ENCODE measurements at regions of chr9 and their contacts with region 1.

Region 1: GRCh38 chr9:36276781-36277181 is 18.5 kb upstream of the GNE start:
- DNase-seq: no peak

Region 2: GRCh38 chr9:35079426-35080341 is 1197.1 kb before region 1 on chr9 and contains the start of gene FANCG:
- intact Hi-C with region 1: loop called in 1 of 2 experiments (anchors 10 kb)
- DNase-seq: peak; percentile 97
- total RNA-seq, gene FANCG: 8.0 to 8.9 TPM

Region 3: GRCh38 chr9:37293664-37294524 is 1017.1 kb after region 1 on chr9:
- intact Hi-C with region 1: no loop called
- DNase-seq: no peak